Posterior vena cava (tissue), 2 donors: ENCODE measurements at regions of chr5 and their contacts with region 1.

Region 1: DNA sequence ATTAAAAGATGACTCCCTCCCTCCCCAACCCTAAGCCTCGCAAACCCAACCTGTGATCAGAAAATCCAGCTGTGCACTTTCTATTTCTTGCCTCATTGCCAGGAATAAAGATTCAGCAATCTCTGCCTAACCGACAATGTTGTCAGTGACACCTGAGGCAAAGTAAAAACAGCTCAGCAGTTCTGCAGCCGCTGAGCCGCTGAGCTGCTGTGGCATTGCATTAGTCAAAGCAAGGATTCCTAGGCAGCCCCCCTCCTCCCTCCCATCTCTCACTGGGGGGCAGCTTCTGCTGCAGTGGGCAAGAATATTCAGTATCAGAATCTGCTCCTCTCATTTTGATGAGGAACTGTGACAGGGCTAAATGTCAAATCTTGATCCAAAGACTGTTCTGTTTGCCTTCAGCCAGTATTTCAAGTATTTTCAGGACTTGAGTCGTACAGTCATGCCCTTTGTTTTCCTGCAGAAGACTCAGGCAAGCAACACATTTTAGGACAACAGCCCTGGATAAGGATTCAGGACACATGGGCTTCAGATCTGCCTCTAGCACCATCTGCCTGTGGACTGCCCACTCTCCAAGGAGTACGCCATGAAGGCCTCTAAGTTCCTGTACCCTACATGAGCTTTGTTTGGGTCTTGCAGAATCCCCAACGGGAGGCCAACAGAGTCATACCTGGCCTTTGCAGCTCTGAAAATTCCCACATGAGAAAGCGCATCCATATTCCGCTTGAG is 41.1 kb upstream of the DAP start:
- DNase-seq: no peak

Region 2: DNA sequence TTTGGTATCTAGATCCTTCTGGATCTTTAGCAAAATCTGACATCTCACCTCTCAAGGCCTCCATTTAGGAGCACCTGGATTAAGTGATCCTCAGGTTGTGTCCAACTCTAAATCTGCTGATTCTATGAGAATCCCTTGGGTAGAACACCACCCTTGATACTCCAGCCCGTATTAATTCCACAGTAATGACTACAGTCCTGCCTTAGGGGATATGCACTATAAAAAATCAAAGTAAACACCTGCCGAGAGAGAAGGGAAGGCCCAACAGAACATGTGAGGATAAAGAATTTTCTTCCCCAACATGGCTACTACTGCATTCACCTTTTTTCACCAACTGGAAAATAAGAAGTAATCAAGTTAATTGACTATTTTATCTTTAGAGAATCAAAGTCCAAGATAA is 68.7 kb before region 1 on chr5:
- intact Hi-C with region 1: loop called in 1 of 2 experiments (anchors 2 kb)
- DNase-seq: no peak